ENCODE measurements at regions of chr14 and their contacts with region 1.

Region 1: DNA sequence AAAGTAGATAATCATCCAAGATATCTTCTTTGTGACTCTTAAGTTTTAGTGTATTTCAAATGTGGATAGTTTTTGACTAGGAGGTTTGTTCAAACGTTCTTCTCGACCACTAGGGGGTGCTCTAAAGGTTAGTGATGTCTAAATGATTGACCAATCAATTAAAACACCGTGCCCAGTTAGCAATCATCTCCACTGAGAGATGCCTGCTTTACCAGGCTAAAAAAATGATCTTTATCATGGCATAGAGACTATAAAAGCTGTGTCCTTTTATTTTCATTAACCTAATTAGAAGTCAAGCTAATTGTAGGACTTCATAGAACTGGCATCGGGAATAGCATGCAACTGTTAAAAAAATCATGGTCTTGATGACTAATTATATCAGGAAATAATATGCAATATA is 153.9 kb downstream of the PRKCH start:
- DNase-seq: peak; percentile 84
- H3K4me3 Mint-ChIP-seq: no peak overlapping the region
- H3K27ac Mint-ChIP-seq: no peak overlapping the region
- H3K4me1 Mint-ChIP-seq: peaks cover 58% of the 10 kb centered on the region
- H3K27me3 Mint-ChIP-seq: no peaks in the 10 kb centered on the region
- CTCF ChIP-seq: peak; percentile 46

Region 2: GRCh38 chr14:61160798-61161197 is 314.5 kb before region 1 on chr14:
- CTCF ChIA-PET with region 1: no interaction called
- POLR2A ChIA-PET with region 1: no interaction called
- intact Hi-C with region 1: no loop called
- DNase-seq: no peak
- H3K4me3 Mint-ChIP-seq: no peak overlapping the region
- H3K27ac Mint-ChIP-seq: no peak overlapping the region
- H3K4me1 Mint-ChIP-seq: no peaks in the 10 kb centered on the region
- H3K27me3 Mint-ChIP-seq: no peaks in the 10 kb centered on the region
- CTCF ChIP-seq: no peak

Region 3: GRCh38 chr14:61247935-61248334 is 227.4 kb before region 1 on chr14:
- CTCF ChIA-PET with region 1: no interaction called
- POLR2A ChIA-PET with region 1: no interaction called
- intact Hi-C with region 1: no loop called
- DNase-seq: no peak
- H3K4me3 Mint-ChIP-seq: no peak overlapping the region
- H3K27ac Mint-ChIP-seq: no peak overlapping the region
- H3K4me1 Mint-ChIP-seq: peaks cover 8% of the 10 kb centered on the region
- H3K27me3 Mint-ChIP-seq: no peaks in the 10 kb centered on the region
- CTCF ChIP-seq: no peak

Region 4: DNA sequence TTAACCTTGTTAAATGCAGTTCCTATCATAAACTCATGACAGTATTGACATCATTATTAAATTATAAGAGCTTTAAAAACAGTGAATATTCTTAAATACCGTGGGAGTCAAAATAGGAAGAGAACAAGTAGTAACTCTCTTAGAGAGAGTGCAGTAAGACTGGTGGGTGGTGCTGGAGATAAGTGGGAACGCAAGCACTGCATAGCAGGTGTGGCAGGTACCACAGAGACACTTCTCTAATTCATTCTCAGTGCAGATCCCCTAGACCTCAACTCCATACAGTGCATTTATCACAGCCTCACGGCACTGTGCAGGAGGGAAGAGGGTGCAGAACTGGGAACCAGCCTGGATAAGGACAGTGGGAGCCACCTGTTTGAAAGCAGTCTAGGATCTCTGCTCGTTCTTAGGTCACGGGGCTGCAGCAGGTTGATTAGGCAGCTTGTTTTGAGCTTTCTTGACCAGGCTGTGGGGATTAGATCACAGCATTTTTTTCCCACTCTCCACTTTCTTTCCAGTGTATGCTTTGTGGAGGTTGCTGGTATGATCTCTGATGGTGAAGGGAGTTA is 11.7 kb after region 1 on chr14:
- CTCF ChIA-PET with region 1: interaction called, 10 read pairs
- POLR2A ChIA-PET with region 1: interaction called, 9 read pairs
- intact Hi-C with region 1: no loop called
- DNase-seq: no peak
- H3K4me3 Mint-ChIP-seq: no peak overlapping the region
- H3K27ac Mint-ChIP-seq: no peak overlapping the region
- H3K4me1 Mint-ChIP-seq: peaks cover 4% of the 10 kb centered on the region
- H3K27me3 Mint-ChIP-seq: no peaks in the 10 kb centered on the region
- CTCF ChIP-seq: no peak

Region 5: DNA sequence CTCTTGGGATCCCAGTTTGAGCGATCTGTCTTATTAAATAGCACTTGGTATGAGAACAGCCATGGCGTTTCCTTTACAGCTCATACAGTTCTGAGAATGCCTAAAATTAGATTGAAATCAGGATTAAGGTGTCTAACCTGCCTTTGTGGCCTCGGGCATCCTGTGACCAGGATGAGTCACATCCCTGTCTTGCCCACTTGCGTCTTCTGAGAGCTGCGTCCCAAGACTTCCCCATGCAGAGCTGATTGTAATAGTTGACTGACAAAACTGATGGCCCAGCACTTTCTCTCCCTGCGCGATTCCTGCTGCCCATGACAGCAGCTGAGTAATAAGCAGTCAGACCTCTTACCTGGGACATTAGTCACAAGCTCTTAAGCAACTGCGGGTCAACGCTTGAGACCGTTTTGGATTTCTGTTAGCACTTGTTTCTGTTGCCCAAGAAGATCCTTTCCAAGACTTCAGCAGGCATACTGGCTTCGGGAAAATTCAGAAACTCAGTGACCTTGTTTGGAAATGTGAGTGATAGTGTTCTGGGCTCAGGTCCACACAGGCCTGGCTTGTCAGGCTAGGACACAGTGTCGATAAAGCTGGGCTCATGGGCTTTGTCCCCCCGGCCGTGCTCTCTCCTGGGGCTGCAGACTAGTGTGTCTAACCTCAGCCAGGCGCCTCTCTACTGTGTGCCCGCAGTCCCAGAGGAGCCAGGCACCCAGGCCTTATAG is 50.1 kb after region 1 on chr14:
- CTCF ChIA-PET with region 1: interaction called, 15 read pairs
- POLR2A ChIA-PET with region 1: interaction called, 103 read pairs
- intact Hi-C with region 1: loop called (anchors 2 kb)
- DNase-seq: peak; percentile 99
- H3K4me3 Mint-ChIP-seq: peak overlapping the region; percentile 1
- H3K27ac Mint-ChIP-seq: peak overlapping the region; percentile 75
- H3K4me1 Mint-ChIP-seq: peaks cover 56% of the 10 kb centered on the region
- H3K27me3 Mint-ChIP-seq: no peaks in the 10 kb centered on the region
- CTCF ChIP-seq: no peak

Region 6: GRCh38 chr14:61568572-61569131 is 93.3 kb after region 1 on chr14:
- CTCF ChIA-PET with region 1: interaction called, 14 read pairs
- POLR2A ChIA-PET with region 1: interaction called, 27 read pairs
- intact Hi-C with region 1: loop called (anchors 2 kb)
- DNase-seq: peak; percentile 69
- H3K4me3 Mint-ChIP-seq: peak overlapping the region; percentile 67
- H3K27ac Mint-ChIP-seq: peak overlapping the region; percentile 85
- H3K4me1 Mint-ChIP-seq: peaks cover 75% of the 10 kb centered on the region
- H3K27me3 Mint-ChIP-seq: no peaks in the 10 kb centered on the region
- CTCF ChIP-seq: peak; percentile 7

Region 7: GRCh38 chr14:61641914-61642613 is 166.7 kb after region 1 on chr14:
- CTCF ChIA-PET with region 1: no interaction called
- POLR2A ChIA-PET with region 1: no interaction called
- intact Hi-C with region 1: no loop called
- DNase-seq: peak; percentile 77
- H3K4me3 Mint-ChIP-seq: no peak overlapping the region
- H3K27ac Mint-ChIP-seq: peak overlapping the region; percentile 7
- H3K4me1 Mint-ChIP-seq: peaks cover 38% of the 10 kb centered on the region
- H3K27me3 Mint-ChIP-seq: no peaks in the 10 kb centered on the region
- CTCF ChIP-seq: no peak

Region 8: GRCh38 chr14:61750708-61751474 is 275.6 kb after region 1 on chr14:
- CTCF ChIA-PET with region 1: interaction called, 6 read pairs
- POLR2A ChIA-PET with region 1: interaction called, 5 read pairs
- intact Hi-C with region 1: loop called (anchors 5 kb)
- DNase-seq: peak; percentile 87
- H3K4me3 Mint-ChIP-seq: peak overlapping the region; percentile 78
- H3K27ac Mint-ChIP-seq: peak overlapping the region; percentile 70
- H3K4me1 Mint-ChIP-seq: peaks cover 17% of the 10 kb centered on the region
- H3K27me3 Mint-ChIP-seq: no peaks in the 10 kb centered on the region
- CTCF ChIP-seq: no peak